ENCODE measurements at regions of chr10 and their contacts with region 1.

Region 1: GRCh38 chr10:92848441-92849233 is at the start of gene EXOC6:
- DNase-seq: peak; percentile 78 to 93 (median 85)
- ATAC-seq: peak; percentile 84
- H3K4me3 ChIP-seq: peak within 1 kb of the TSS; percentile 66 to 76
- H3K4me3 Mint-ChIP-seq: peak within 1 kb of the TSS; percentile 87
- H3K27ac ChIP-seq: peak within 1 kb of the TSS; percentile 76 to 87
- H3K27ac Mint-ChIP-seq: peak within 1 kb of the TSS; percentile 91
- H3K4me1 ChIP-seq: peaks cover 11% of the 10 kb centered on the region
- H3K4me1 Mint-ChIP-seq: peaks cover 17% of the 10 kb centered on the region
- H3K27me3 ChIP-seq: no peaks in the 10 kb centered on the region
- H3K27me3 Mint-ChIP-seq: no peaks in the 10 kb centered on the region
- CTCF ChIP-seq: no peak
- total RNA-seq, gene EXOC6: 6.0 to 7.0 TPM

Region 2: DNA sequence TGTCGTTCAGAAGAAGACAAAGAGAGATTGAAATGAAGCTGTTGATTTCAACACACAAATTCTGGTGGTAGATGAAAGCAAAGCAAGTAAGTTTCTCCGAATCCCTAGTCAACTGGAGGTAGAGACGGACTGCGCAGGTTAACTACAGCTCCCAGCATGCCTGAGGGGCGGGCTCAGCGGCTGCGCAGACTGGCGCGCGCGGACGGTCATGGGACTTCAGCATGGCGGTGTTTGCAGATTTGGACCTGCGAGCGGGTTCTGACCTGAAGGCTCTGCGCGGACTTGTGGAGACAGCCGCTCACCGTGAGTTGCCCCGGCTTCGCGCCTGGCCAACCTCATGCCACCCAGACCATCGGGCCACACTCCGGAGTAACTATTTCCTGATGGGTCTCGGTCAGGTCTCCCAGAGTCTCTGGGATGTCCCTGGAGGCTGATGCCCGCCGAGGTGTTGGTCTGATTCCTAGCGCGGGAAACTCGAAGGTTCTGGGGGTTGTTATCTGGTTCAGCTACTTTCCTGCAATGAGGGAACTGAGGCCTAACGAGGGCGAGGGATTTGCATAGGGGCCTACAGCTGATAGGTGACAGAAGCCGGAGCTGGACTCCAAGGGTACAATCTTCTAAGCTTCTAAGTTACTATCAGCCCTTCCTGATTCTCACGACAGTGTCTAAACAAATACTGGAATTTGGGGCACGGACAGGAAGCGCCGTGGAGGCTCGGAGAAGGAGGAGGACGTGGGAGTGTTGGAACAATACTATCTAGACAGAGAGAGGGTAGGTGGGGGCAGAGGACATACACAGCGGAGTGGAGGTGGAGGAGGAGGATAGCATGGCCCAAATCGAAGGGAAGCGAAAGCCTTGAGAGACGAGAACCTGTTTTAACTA is 1976.6 kb before region 1 on chr10 and contains the start of gene RPP30:
- CTCF ChIA-PET with region 1: no interaction called
- POLR2A ChIA-PET with region 1: no interaction called
- intact Hi-C with region 1: loop called in 1 of 2 experiments (anchors 10 kb)
- DNase-seq: peak; percentile 65 to 84 (median 79)
- ATAC-seq: peak; percentile 99
- H3K4me3 ChIP-seq: peak within 1 kb of the TSS; percentile 73 to 95
- H3K4me3 Mint-ChIP-seq: peak within 1 kb of the TSS; percentile 97
- H3K27ac ChIP-seq: peak within 1 kb of the TSS; percentile 34 to 58
- H3K27ac Mint-ChIP-seq: peak within 1 kb of the TSS; percentile 88
- H3K4me1 ChIP-seq: peaks cover 18% of the 10 kb centered on the region
- H3K4me1 Mint-ChIP-seq: peaks cover 40% of the 10 kb centered on the region
- H3K27me3 ChIP-seq: no peaks in the 10 kb centered on the region
- H3K27me3 Mint-ChIP-seq: peaks cover 20% of the 10 kb centered on the region
- CTCF ChIP-seq: no peak
- total RNA-seq, gene RPP30: 29.7 TPM

Region 3: DNA sequence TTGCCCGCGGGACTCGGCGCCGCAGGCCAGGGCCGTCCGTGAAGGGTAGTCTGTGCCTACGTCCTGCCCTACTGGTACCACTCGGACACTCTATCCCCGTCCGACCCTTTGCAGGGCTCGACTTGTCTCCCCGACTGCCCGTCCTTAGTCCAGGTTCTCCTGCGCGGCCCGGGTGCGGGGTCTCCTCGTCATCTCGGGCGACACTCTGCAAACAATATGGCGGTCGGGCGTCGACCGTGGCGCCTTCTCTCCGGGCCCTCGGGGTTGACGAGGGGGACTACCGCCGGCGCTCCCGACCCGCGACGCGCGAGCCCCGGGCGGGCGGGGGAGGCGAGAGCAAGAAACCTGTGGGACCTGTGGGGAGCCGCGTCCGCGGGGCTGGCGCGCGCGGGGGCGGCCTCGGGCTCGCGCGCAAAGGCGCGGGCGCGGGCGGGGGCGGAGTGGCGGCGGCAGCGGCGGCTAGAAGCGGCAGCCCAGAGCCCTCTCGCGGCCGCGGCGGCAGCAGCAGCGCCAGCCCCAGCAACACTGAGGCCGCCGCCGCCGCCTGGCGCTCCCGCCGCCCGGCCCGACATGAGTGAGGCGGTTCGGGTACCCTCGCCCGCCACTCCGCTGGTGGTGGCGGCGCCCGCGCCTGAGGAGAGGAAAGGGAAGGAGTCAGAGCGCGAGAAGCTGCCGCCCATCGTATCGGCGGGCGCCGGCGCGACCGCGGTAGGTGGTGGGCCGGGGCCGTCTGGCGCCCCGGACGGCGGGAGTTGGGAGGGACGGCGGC is 1438.6 kb before region 1 on chr10 and contains the start of gene HECTD2:
- CTCF ChIA-PET with region 1: no interaction called
- POLR2A ChIA-PET with region 1: no interaction called
- intact Hi-C with region 1: loop called (anchors 1 to 5 kb)
- DNase-seq: peak; percentile 65 to 92 (median 82)
- ATAC-seq: peak; percentile 86
- H3K4me3 ChIP-seq: peak within 1 kb of the TSS; percentile 91 to 97
- H3K4me3 Mint-ChIP-seq: peak within 1 kb of the TSS; percentile 86
- H3K27ac ChIP-seq: peak within 1 kb of the TSS; percentile 90 to 95
- H3K27ac Mint-ChIP-seq: peak within 1 kb of the TSS; percentile 90
- H3K4me1 ChIP-seq: peaks cover 12% of the 10 kb centered on the region
- H3K4me1 Mint-ChIP-seq: peaks cover 13% of the 10 kb centered on the region
- H3K27me3 ChIP-seq: no peaks in the 10 kb centered on the region
- H3K27me3 Mint-ChIP-seq: no peaks in the 10 kb centered on the region
- CTCF ChIP-seq: peak; percentile 41
- total RNA-seq, gene HECTD2: 0.69 to 1.5 TPM

Region 4: GRCh38 chr10:92290837-92291615 is 557.6 kb before region 1 on chr10 and contains the starts of genes CPEB3 and MARCHF5:
- CTCF ChIA-PET with region 1: no interaction called
- POLR2A ChIA-PET with region 1: interaction called, 5 read pairs
- intact Hi-C with region 1: loop called (anchors 5 kb)
- DNase-seq: peak; percentile 78 to 96 (median 90)
- ATAC-seq: peak; percentile 97
- H3K4me3 ChIP-seq: peak within 1 kb of the TSS; percentile 91 to 98
- H3K4me3 Mint-ChIP-seq: peak within 1 kb of the TSS; percentile 97
- H3K27ac ChIP-seq: peak within 1 kb of the TSS; percentile 70 to 83
- H3K27ac Mint-ChIP-seq: peak within 1 kb of the TSS; percentile 88
- H3K4me1 ChIP-seq: peaks cover 20% of the 10 kb centered on the region
- H3K4me1 Mint-ChIP-seq: peaks cover 36% of the 10 kb centered on the region
- H3K27me3 ChIP-seq: no peaks in the 10 kb centered on the region
- H3K27me3 Mint-ChIP-seq: no peaks in the 10 kb centered on the region
- CTCF ChIP-seq: peak; percentile 50
- total RNA-seq, gene CPEB3: 0.71 to 1.1 TPM
- total RNA-seq, gene MARCHF5: 48.3 to 48.9 TPM

Region 5: DNA sequence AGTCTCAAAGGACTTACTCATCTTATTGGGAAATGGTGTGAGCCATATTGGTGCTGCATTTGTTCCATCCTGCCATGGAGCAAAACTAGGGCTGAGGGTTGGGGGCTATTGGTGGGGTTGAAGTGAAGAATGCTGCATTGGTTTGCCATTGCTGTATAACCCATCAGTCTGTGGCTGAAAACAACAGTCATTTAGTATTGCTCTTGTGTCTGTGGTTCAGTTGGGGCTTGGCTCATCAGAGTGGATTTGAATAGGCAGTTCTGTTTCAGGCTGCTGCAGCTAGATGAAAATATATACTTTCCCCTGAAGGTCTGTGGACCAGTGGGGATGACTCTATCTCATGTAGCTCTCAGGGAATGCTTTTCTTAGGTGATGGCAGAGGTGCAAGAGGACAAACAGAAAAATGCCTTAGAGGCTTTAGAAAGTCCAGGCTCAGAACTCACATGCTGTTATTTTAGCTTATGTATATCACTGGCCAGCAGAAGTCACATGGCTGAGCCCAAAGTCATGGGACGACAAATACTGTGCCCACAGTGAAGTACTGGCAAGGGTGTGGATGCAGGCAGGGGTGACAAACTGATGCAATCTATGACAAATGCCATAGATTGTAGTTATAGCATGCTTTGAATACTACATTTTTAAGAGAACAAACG is 15.5 kb before region 1 on chr10:
- CTCF ChIA-PET with region 1: interaction called, 25 read pairs
- POLR2A ChIA-PET with region 1: interaction called, 8 read pairs
- intact Hi-C with region 1: no loop called
- DNase-seq: no peak
- ATAC-seq: no peak
- H3K4me3 ChIP-seq: no peak overlapping the region
- H3K4me3 Mint-ChIP-seq: no peak overlapping the region
- H3K27ac ChIP-seq: no peak overlapping the region
- H3K27ac Mint-ChIP-seq: no peak overlapping the region
- H3K4me1 ChIP-seq: peaks cover 4% of the 10 kb centered on the region
- H3K4me1 Mint-ChIP-seq: peaks cover 9% of the 10 kb centered on the region
- H3K27me3 ChIP-seq: no peaks in the 10 kb centered on the region
- H3K27me3 Mint-ChIP-seq: no peaks in the 10 kb centered on the region
- CTCF ChIP-seq: no peak

Region 6: GRCh38 chr10:93496322-93497041 is 647.8 kb after region 1 on chr10 and contains the start of gene CEP55:
- CTCF ChIA-PET with region 1: no interaction called
- POLR2A ChIA-PET with region 1: no interaction called
- intact Hi-C with region 1: loop called (anchors 1 to 2 kb)
- DNase-seq: peak; percentile 90 to 96 (median 95)
- ATAC-seq: peak; percentile 99
- H3K4me3 ChIP-seq: peak within 1 kb of the TSS; percentile 87 to 97
- H3K4me3 Mint-ChIP-seq: peak within 1 kb of the TSS; percentile 90
- H3K27ac ChIP-seq: peak within 1 kb of the TSS in 1 of 2 experiments; percentile 54
- H3K27ac Mint-ChIP-seq: no peak within 1 kb of the TSS
- H3K4me1 ChIP-seq: peaks cover 10% of the 10 kb centered on the region
- H3K4me1 Mint-ChIP-seq: peaks cover 14% of the 10 kb centered on the region
- H3K27me3 ChIP-seq: no peaks in the 10 kb centered on the region
- H3K27me3 Mint-ChIP-seq: peaks cover 10% of the 10 kb centered on the region
- CTCF ChIP-seq: no peak
- total RNA-seq, gene CEP55: 0.16 TPM in 1 of 2 experiments, not detected in the other

Region 7: DNA sequence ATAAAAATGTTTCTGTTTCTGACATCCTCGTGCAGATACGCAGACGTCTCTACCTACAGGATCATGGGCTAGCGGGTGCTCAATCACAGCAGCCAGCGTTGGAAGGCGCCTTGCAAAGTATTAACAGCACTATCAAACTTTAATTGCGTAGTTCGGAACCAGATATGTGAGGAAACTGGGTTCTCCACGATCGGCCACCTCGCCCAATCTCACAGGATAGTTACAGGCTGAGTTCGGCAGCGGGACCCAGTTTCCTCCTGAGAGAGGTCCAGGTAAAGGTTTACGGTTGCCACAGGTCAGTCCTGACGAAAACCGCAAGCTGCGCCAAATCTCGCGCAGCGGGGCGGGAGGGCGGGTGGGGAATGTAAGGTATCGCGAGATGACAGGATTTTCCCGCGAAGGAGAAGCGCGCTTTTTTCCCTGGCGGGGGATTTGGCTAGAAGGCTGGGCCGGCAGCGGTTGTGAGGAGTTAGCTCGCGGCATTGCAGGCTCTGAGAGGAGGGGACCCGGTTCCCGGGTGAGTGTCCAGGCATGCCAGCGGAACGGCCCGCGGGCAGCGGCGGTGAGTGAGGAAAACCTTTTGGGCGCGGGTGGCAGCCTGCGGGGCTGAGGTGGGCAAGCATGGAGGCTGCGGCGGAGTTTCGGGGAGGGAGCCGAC is 1696.9 kb after region 1 on chr10 and contains the start of gene HELLS:
- CTCF ChIA-PET with region 1: no interaction called
- POLR2A ChIA-PET with region 1: no interaction called
- intact Hi-C with region 1: loop called in 1 of 2 experiments (anchors 5 kb)
- DNase-seq: peak; percentile 17 to 83 (median 63)
- ATAC-seq: peak; percentile 76
- H3K4me3 ChIP-seq: peak within 1 kb of the TSS; percentile 90
- H3K4me3 Mint-ChIP-seq: peak within 1 kb of the TSS; percentile 93
- H3K27ac ChIP-seq: peak within 1 kb of the TSS; percentile 70 to 71
- H3K27ac Mint-ChIP-seq: peak within 1 kb of the TSS; percentile 93
- H3K4me1 ChIP-seq: peaks cover 18% of the 10 kb centered on the region
- H3K4me1 Mint-ChIP-seq: peaks cover 23% of the 10 kb centered on the region
- H3K27me3 ChIP-seq: no peaks in the 10 kb centered on the region
- H3K27me3 Mint-ChIP-seq: no peaks in the 10 kb centered on the region
- CTCF ChIP-seq: no peak
- total RNA-seq, gene HELLS: 8.7 to 9.1 TPM

Measured in CD8-positive, alpha-beta T cell (primary cell).